MCF 10A (cell line): ENCODE measurements at regions of chr5 and their contacts with region 1.

Region 1: GRCh38 chr5:31232273-31232888 is 38.9 kb downstream of the CDH6 start:
- DNase-seq: peak; percentile 73
- H3K4me3 Mint-ChIP-seq: no peak overlapping the region
- H3K27ac Mint-ChIP-seq: no peak overlapping the region
- H3K4me1 Mint-ChIP-seq: no peaks in the 10 kb centered on the region
- H3K27me3 Mint-ChIP-seq: no peaks in the 10 kb centered on the region
- CTCF ChIP-seq: peak; percentile 73

Region 2: DNA sequence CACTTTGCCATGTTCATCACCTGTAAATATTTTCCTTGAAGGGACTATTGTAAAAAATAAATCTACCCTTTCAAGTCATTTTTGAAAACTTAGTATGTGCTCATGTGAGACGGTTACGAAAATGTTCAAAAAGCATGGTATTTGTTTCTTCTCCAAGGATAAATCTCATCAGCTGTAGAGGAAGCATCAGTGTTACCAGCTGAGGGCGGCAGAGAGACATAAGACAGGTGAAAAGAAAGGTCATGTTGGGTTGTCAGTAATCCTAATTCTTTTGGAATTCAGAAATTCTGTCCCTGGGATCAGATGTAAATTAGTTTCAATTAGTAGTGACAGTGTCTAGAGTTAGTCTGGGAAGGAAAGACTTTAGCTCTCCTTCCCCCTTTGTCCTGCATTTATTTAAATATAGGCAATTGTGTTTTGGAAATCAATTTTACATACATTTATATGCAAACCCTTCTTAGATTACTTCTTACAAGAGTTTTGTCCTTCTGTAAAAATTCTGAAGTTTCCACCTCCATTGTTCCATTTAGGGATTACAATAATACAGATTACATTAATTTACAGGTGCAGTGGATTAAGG is 830.8 kb before region 1 on chr5:
- CTCF ChIA-PET with region 1: interaction called, 27 read pairs
- POLR2A ChIA-PET with region 1: interaction called, 3 read pairs
- intact Hi-C with region 1: loop called (anchors 1 kb)
- DNase-seq: peak; percentile 68
- H3K4me3 Mint-ChIP-seq: no peak overlapping the region
- H3K27ac Mint-ChIP-seq: no peak overlapping the region
- H3K4me1 Mint-ChIP-seq: peaks cover 4% of the 10 kb centered on the region
- H3K27me3 Mint-ChIP-seq: no peaks in the 10 kb centered on the region
- CTCF ChIP-seq: peak; percentile 59

Region 3: GRCh38 chr5:31186672-31187267 is 45.6 kb before region 1 on chr5:
- CTCF ChIA-PET with region 1: interaction called, 21 read pairs
- POLR2A ChIA-PET with region 1: no interaction called
- intact Hi-C with region 1: no loop called
- DNase-seq: peak; percentile 64
- H3K4me3 Mint-ChIP-seq: no peak overlapping the region
- H3K27ac Mint-ChIP-seq: no peak overlapping the region
- H3K4me1 Mint-ChIP-seq: no peaks in the 10 kb centered on the region
- H3K27me3 Mint-ChIP-seq: no peaks in the 10 kb centered on the region
- CTCF ChIP-seq: peak; percentile 63

Region 4: DNA sequence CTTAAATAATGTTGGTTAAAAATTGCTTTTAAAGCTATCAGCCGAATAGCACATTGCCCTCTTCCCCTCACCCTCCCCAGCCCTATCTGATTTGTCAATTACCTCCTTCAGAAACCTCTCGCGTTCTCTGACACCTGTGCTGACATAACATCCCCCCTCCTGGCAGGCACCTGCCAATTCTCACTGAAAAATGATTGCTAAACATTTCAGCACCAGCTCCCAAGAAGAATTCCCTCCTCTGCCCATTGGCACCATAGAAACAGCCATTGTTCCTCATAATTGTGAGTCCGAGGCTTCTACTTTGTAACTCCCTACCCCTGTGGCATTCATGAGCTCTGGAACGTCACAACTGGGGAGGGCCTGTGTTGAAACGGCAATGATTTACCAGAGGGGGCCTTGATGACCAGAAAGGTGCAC is 18.7 kb before region 1 on chr5:
- CTCF ChIA-PET with region 1: interaction called, 17 read pairs
- POLR2A ChIA-PET with region 1: no interaction called
- intact Hi-C with region 1: no loop called
- DNase-seq: no peak
- H3K4me3 Mint-ChIP-seq: no peak overlapping the region
- H3K27ac Mint-ChIP-seq: no peak overlapping the region
- H3K4me1 Mint-ChIP-seq: no peaks in the 10 kb centered on the region
- H3K27me3 Mint-ChIP-seq: no peaks in the 10 kb centered on the region
- CTCF ChIP-seq: no peak

Region 5: DNA sequence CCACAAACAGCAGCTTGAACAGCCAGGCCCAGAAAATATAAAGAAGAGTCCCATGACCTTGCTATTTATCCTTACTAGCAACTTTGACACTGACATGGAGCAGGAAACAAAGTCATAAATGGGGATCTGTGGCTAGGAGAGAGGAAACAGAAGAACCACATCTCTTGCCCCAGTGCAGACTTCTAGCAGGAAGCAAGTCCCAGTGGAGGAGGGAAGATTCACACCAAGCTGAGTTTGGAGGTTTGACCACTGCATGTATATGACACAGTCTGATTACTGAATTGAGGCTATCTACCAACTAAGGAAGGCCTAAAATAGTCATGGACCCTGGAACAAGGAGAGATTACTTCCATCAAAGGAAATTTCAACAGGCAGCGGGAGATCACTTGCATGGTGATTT is 12.5 kb after region 1 on chr5:
- CTCF ChIA-PET with region 1: interaction called, 36 read pairs
- POLR2A ChIA-PET with region 1: no interaction called
- intact Hi-C with region 1: no loop called
- DNase-seq: no peak
- H3K4me3 Mint-ChIP-seq: no peak overlapping the region
- H3K27ac Mint-ChIP-seq: no peak overlapping the region
- H3K4me1 Mint-ChIP-seq: no peaks in the 10 kb centered on the region
- H3K27me3 Mint-ChIP-seq: no peaks in the 10 kb centered on the region
- CTCF ChIP-seq: no peak

Region 6: DNA sequence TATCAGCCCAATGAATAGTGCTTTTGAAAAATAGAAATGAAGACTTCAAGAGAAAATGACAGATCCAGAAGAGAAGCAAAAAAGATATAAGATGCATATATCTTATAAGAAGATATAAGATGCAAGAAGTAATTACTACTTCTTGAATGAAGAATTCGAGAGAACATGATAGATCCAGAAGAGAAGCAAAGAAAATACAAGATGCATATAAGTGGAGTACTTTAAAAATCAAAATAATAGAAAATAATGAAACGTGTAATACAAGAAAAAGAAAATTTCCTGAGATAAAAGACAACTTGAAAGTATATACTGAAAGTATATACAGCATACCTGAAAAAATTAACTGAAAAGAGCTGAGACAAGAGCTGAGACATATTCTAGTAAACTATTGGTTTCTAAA is 222.8 kb after region 1 on chr5:
- CTCF ChIA-PET with region 1: no interaction called
- POLR2A ChIA-PET with region 1: no interaction called
- intact Hi-C with region 1: no loop called
- DNase-seq: no peak
- H3K4me3 Mint-ChIP-seq: no peak overlapping the region
- H3K27ac Mint-ChIP-seq: no peak overlapping the region
- H3K4me1 Mint-ChIP-seq: peaks cover 5% of the 10 kb centered on the region
- H3K27me3 Mint-ChIP-seq: no peaks in the 10 kb centered on the region
- CTCF ChIP-seq: no peak